Upper lobe of right lung (tissue), 1 donor: ENCODE measurements at regions of chr10 and their contacts with region 1.

Region 1: DNA sequence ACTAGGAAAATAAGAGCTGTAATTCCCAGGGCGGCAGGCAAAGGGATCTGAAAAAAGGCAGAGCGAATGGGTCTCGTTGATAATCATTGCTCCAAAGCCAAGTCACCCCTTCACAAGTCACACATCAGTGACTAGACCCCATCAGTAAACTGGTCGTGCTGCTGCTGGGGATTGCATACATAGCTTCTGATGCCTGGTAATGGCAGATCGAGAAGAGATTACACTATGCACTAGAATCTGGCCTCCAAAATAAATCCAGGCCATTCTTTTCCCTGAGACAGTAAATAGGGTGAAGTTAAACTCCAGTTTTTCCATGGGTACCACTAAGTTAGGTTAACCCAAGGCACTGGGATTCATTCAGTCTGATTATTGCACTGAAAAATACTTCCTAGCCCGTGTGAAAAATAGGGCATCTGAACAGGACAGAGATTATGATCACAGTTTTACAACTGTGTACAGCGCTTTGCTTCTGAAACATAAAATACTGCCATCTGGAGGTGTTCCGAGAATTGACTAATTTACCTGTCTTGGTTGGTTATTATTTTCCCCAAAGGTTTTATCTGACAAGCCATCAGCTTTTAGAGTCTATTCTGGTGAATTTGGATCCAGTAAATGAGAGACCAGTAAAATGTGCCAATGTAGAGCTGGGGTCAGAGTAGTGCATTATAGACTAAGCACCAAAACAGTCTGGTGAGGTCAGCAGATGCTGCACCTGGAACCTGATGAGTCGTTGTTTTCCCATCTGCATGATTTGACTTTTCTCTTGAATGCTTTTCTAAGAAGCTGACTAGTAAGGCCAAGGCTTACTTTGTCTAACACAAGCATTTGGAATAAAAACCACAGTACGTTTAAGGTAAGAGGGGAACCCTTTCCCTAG is 82.9 kb upstream of the AFAP1L2 start:
- DNase-seq: no peak
- ATAC-seq: no peak
- H3K4me3 ChIP-seq: no peak overlapping the region
- H3K27ac ChIP-seq: no peak overlapping the region
- H3K4me1 ChIP-seq: peaks cover 6% of the 10 kb centered on the region
- H3K27me3 ChIP-seq: no peaks in the 10 kb centered on the region
- CTCF ChIP-seq: no peak

Region 2: GRCh38 chr10:114403541-114404161 is 83.5 kb before region 1 on chr10:
- intact Hi-C with region 1: no loop called
- DNase-seq: no peak
- ATAC-seq: peak; percentile 26
- H3K4me3 ChIP-seq: peak overlapping the region; percentile 48
- H3K27ac ChIP-seq: no peak overlapping the region
- H3K4me1 ChIP-seq: peaks cover 25% of the 10 kb centered on the region
- H3K27me3 ChIP-seq: peaks cover 14% of the 10 kb centered on the region
- CTCF ChIP-seq: peak; percentile 7

Region 3: GRCh38 chr10:114538181-114538906 is 51.2 kb after region 1 on chr10:
- intact Hi-C with region 1: loop called (anchors 10 kb)
- DNase-seq: no peak
- ATAC-seq: peak; percentile 53
- H3K4me3 ChIP-seq: no peak overlapping the region
- H3K27ac ChIP-seq: no peak overlapping the region
- H3K4me1 ChIP-seq: peaks cover 27% of the 10 kb centered on the region
- H3K27me3 ChIP-seq: no peaks in the 10 kb centered on the region
- CTCF ChIP-seq: no peak